Left lung (tissue), 14 donors: ENCODE measurements at regions of chr2 and their contacts with region 1.

Region 1: GRCh38 chr2:162890690-162891311 is 52.2 kb upstream of the KCNH7 start:
- DNase-seq: peak in 2 of 4 donors; percentile 2 to 22
- ATAC-seq: peak; percentile 83
- H3K4me3 ChIP-seq: no peak overlapping the region
- H3K27ac ChIP-seq: no peak overlapping the region
- H3K4me1 ChIP-seq: no peaks in the 10 kb centered on the region
- H3K27me3 ChIP-seq: no peaks in the 10 kb centered on the region
- CTCF ChIP-seq: peak; percentile 61 to 62

Region 2: DNA sequence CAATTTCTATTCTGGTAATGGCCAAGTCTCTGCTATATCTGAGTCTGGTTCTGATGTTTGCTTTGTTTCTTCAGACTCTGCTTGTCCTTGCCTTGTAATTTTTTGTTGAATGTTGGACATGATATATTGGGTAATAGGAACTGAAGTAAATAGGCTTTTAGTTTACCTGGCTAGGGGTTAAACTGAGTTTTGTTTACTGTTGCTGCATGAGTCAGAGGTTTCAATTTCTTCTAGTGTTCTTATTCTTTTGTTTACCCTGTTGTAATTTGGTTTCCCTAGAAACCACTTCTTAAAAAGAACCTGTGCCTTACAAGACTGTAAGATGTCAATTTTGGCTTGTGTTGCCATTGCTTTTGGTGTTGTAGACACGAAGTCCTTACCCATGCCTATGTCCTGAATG is 232.7 kb after region 1 on chr2:
- intact Hi-C with region 1: loop called in 1 of 2 experiments (anchors 10 kb)
- DNase-seq: no peak
- ATAC-seq: peak; percentile 92
- H3K4me3 ChIP-seq: no peak overlapping the region
- H3K27ac ChIP-seq: no peak overlapping the region
- H3K4me1 ChIP-seq: no peaks in the 10 kb centered on the region
- H3K27me3 ChIP-seq: no peaks in the 10 kb centered on the region
- CTCF ChIP-seq: no peak

Region 3: DNA sequence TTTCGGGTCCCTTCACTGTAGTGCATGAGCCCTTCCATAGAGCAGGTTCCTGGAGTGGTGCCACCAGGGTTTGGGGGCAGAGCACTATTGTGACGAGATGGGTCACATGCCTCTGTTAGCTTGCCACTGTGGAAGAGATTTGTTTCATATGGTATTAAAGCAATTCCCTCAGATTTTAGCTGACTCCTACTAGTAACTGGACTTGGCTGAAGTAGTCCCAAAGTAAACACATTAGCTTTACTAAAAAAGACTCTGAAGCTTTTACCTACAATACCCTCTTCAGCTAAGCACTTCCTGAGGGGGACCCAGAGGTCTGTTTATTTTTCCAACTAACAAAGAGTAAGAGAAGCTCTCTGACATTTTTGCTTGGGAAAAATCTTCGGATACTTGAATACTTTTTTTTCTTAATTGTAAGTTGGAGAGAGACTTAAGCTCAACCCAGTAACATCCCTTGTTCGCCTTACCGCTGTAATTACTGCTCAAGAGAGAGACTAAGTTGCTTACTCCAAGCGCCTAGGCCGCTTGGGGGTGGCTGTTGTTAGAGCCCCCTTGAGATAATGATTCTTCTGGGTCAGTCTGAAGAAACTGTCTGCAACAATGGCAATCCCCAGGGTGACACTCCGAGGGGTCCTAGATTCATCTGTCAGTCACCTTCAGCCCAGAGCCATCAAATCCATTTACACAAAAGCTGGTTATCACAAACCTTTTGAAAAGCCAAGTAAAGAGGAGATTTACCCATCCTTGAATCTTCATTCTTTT is 667.6 kb after region 1 on chr2:
- intact Hi-C with region 1: no loop called
- DNase-seq: peak in 2 of 4 donors; percentile 19 to 48
- ATAC-seq: peak; percentile 90
- H3K4me3 ChIP-seq: no peak overlapping the region
- H3K27ac ChIP-seq: no peak overlapping the region
- H3K4me1 ChIP-seq: no peaks in the 10 kb centered on the region
- H3K27me3 ChIP-seq: no peaks in the 10 kb centered on the region
- CTCF ChIP-seq: no peak